ENCODE measurements at regions of chr6 and their contacts with region 1.

Region 1: DNA sequence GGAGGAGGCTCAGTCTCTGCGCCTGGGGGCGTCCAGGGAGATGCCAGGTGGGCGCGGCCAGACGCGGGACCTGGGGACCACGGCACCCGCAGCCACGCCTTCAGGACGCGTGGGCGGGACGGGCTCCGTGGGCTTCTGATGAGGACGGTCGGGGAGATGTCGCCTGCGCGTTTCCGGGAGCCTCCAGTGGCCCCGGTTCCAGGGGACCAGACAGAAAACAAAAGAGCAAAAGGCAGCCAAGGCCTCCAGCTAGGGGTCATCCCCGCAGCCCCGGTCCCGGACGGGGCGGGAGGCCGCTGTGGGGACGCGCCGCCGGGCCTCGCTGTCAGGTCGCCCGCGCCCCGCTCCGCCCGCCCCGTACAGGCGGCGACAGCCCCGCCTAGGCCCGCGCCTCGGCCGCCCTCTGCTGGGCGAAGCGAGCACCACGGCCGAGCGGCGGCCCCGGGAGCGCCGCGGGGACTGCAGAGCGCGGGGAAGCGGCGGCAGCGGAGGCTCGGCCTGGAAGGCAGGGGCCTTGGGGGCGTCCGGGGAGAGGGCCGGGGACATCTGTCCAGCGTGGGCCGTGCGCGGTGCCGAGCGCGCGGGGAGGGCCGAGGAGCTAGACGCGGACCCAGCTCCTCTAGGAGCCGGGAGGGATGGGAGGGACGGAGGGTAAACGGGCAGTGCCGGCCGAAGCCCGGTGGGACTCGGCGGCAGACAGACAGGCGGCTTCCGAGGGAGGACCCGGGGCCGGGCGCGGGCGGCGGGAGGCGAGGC is 48.7 kb downstream of the TMEM242 start:
- DNase-seq: peak; percentile 72 to 94 (median 88)
- ATAC-seq: peak; percentile 95
- H3K4me3 ChIP-seq: peak overlapping the region; percentile 80
- H3K4me3 Mint-ChIP-seq: peak overlapping the region; percentile 83 to 96 (median 92)
- H3K27ac ChIP-seq: peak overlapping the region; percentile 93
- H3K27ac Mint-ChIP-seq: peak overlapping the region; percentile 89 to 98 (median 92)
- H3K4me1 ChIP-seq: peaks cover 6 to 7% of the 10 kb centered on the region in 2 donors
- H3K4me1 Mint-ChIP-seq: peaks cover 0 to 10% (median 8%) of the 10 kb centered on the region in 7 donors
- H3K27me3 ChIP-seq: no peaks in the 10 kb centered on the region
- H3K27me3 Mint-ChIP-seq: peaks cover 0 to 15% (median 0%) of the 10 kb centered on the region in 5 donors

Region 2: GRCh38 chr6:156378853-156379252 is 895.8 kb before region 1 on chr6:
- CTCF ChIA-PET with region 1: no interaction called
- POLR2A ChIA-PET with region 1: no interaction called
- intact Hi-C with region 1: loop called in 1 of 2 experiments (anchors 1 kb)
- DNase-seq: peak in 6 of 9 donors; percentile 19 to 48 (median 36)
- ATAC-seq: peak; percentile 74
- H3K4me3 ChIP-seq: no peak overlapping the region
- H3K4me3 Mint-ChIP-seq: no peak overlapping the region
- H3K27ac ChIP-seq: no peak overlapping the region
- H3K27ac Mint-ChIP-seq: peak overlapping the region in 6 of 9 donors; percentile 8 to 67 (median 36)
- H3K4me1 ChIP-seq: no peaks in the 10 kb centered on the region
- H3K4me1 Mint-ChIP-seq: peaks cover 0 to 21% (median 0%) of the 10 kb centered on the region in 7 donors
- H3K27me3 ChIP-seq: no peaks in the 10 kb centered on the region
- H3K27me3 Mint-ChIP-seq: peaks cover 0 to 4% (median 0%) of the 10 kb centered on the region in 5 donors

Region 3: GRCh38 chr6:156686995-156687788 is 587.5 kb before region 1 on chr6:
- CTCF ChIA-PET with region 1: no interaction called
- POLR2A ChIA-PET with region 1: no interaction called
- intact Hi-C with region 1: loop called (anchors 1 kb)
- DNase-seq: peak in 8 of 9 donors; percentile 77 to 91 (median 87)
- ATAC-seq: peak; percentile 93
- H3K4me3 ChIP-seq: peak overlapping the region; percentile 89
- H3K4me3 Mint-ChIP-seq: peak overlapping the region; percentile 81 to 96 (median 90)
- H3K27ac ChIP-seq: peak overlapping the region; percentile 100
- H3K27ac Mint-ChIP-seq: peak overlapping the region; percentile 87 to 99 (median 95)
- H3K4me1 ChIP-seq: peaks cover 4 to 17% of the 10 kb centered on the region in 2 donors
- H3K4me1 Mint-ChIP-seq: peaks cover 10 to 28% (median 20%) of the 10 kb centered on the region in 7 donors
- H3K27me3 ChIP-seq: no peaks in the 10 kb centered on the region
- H3K27me3 Mint-ChIP-seq: peaks cover 0 to 27% (median 0%) of the 10 kb centered on the region in 5 donors

Region 4: DNA sequence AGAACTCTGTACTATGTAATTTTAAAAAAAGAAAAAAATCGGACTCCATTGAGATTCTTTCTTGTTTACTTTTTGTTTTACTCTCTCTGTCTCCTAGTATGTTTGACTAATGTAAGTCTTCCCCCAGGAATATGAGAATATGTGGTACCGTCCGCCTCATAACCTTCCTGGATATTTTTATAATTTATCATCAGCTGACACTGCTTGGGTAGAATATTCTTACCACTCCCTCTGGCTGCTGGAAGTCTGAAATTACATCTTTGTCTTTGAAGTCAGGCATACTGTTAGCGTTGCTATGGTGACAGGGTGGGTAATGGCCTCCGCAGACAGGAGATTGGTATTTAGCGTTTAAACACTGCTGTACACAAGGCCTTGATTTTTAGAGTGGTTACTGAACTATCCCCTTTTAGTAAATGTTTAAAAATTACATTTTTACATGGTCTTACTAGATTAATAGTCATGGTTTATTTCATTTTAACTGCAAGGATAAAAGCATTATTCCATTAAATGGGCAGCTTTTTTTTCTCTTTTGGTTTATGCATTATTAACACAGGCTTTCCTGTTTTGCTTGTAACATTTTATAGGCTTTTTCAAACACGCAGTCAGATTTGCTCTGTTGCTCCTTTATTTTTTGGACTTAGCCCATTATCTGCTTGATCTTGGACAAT is 321.0 kb before region 1 on chr6:
- CTCF ChIA-PET with region 1: no interaction called
- POLR2A ChIA-PET with region 1: no interaction called
- intact Hi-C with region 1: no loop called
- DNase-seq: peak in 7 of 9 donors; percentile 67 to 85 (median 82)
- ATAC-seq: peak; percentile 95
- H3K4me3 ChIP-seq: no peak overlapping the region
- H3K4me3 Mint-ChIP-seq: peak overlapping the region in 5 of 10 donors; percentile 10 to 51 (median 37)
- H3K27ac ChIP-seq: no peak overlapping the region
- H3K27ac Mint-ChIP-seq: peak overlapping the region in 8 of 9 donors; percentile 27 to 83 (median 51)
- H3K4me1 ChIP-seq: peaks cover 15 to 20% of the 10 kb centered on the region in 2 donors
- H3K4me1 Mint-ChIP-seq: peaks cover 41 to 84% (median 77%) of the 10 kb centered on the region in 7 donors
- H3K27me3 ChIP-seq: no peaks in the 10 kb centered on the region
- H3K27me3 Mint-ChIP-seq: no peaks in the 10 kb centered on the region

Region 5: DNA sequence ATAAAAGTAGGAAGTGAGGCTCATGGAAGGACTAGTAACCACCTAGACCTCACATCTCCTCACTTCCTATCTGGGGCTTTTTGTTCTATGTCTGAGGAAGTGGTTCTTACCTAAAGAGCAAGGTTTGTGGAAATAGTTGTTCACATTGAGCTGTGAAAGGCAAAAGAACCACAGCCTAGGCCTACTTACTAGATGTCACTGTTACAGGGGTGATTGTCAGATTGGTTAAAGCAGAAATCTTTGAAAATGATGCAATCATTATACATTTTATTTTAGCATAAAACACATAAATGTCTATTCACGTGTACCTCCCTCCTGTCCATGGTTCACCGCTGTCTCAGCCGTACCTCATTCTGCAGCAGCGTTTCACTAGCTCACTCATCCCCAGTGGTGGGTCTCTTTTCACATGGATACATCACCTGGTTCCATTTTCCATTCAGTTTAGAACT is 220.1 kb before region 1 on chr6:
- CTCF ChIA-PET with region 1: no interaction called
- POLR2A ChIA-PET with region 1: no interaction called
- intact Hi-C with region 1: loop called in 1 of 2 experiments (anchors 1 kb)
- DNase-seq: peak in 7 of 9 donors; percentile 60 to 83 (median 78)
- ATAC-seq: peak; percentile 97
- H3K4me3 ChIP-seq: peak overlapping the region; percentile 19
- H3K4me3 Mint-ChIP-seq: peak overlapping the region; percentile 37 to 73 (median 58)
- H3K27ac ChIP-seq: peak overlapping the region; percentile 60
- H3K27ac Mint-ChIP-seq: peak overlapping the region; percentile 81 to 94 (median 88)
- H3K4me1 ChIP-seq: peaks cover 27 to 31% of the 10 kb centered on the region in 2 donors
- H3K4me1 Mint-ChIP-seq: peaks cover 34 to 73% (median 57%) of the 10 kb centered on the region in 7 donors
- H3K27me3 ChIP-seq: no peaks in the 10 kb centered on the region
- H3K27me3 Mint-ChIP-seq: no peaks in the 10 kb centered on the region

Region 6: DNA sequence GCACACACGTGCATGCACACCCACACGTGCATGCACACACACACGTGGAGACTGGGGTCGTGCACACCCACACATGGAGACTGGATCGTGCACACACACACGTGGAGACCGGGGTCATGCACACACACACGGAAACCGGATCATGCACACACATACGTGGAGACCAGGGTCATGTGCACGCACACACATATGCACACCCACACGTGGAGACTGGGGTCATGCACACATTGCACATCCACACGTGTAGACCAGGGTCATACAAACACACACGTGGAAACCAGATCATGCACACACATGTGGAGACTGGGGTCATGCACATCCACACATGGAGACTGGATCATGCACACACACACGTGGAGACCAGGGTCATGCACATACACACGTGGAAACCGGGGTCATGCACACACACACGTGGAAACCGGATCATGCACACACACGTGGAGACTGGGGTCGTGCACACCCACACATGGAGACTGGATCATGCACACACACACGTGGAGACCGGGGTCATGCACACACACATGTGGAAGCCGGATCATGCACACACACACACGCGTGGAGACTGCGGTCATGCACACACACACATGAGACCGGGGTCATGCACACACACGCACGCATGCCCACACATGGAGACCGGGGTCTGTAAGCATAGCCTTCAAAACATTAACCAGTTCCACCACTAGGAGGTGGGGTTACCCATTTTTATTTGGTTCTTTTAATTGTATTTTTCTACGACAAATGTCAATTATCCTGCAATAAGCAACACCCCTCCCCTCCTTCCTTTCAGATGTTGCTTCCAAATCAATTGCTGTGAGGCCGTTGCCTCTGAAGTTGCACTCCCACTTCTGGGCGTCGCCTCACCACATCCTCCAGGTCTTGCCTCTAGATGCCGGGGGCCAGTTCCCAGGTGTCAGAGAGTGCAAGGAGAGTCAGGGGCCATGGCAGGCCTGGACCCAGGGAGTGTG is 47.2 kb before region 1 on chr6:
- CTCF ChIA-PET with region 1: interaction called, 7 read pairs
- POLR2A ChIA-PET with region 1: interaction called, 18 read pairs
- intact Hi-C with region 1: loop called in 1 of 2 experiments (anchors 1 kb)
- DNase-seq: peak in 7 of 9 donors; percentile 39 to 65 (median 57)
- ATAC-seq: peak; percentile 41
- H3K4me3 ChIP-seq: no peak overlapping the region
- H3K4me3 Mint-ChIP-seq: peak overlapping the region in 9 of 10 donors; percentile 56 to 81 (median 62)
- H3K27ac ChIP-seq: no peak overlapping the region
- H3K27ac Mint-ChIP-seq: peak overlapping the region; percentile 38 to 88 (median 62)
- H3K4me1 ChIP-seq: peaks cover 15 to 40% of the 10 kb centered on the region in 2 donors
- H3K4me1 Mint-ChIP-seq: peaks cover 33 to 64% (median 51%) of the 10 kb centered on the region in 7 donors
- H3K27me3 ChIP-seq: no peaks in the 10 kb centered on the region
- H3K27me3 Mint-ChIP-seq: peaks cover 0 to 9% (median 5%) of the 10 kb centered on the region in 5 donors

Region 7: DNA sequence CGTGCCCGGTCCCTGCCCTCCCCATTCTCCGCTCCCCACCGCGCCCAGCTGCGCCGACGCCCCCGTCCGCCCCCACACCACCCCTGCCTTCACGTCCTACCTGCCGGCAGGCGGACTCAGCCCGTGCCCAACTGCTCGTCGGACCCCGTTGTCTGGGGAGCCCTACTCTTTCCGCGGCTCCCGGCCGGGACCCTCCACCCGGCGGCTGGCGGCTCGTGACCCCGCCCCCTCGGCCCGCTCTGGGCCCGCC is 893.3 kb after region 1 on chr6 and contains the start of gene SERAC1:
- CTCF ChIA-PET with region 1: no interaction called
- POLR2A ChIA-PET with region 1: no interaction called
- intact Hi-C with region 1: loop called in 1 of 2 experiments (anchors 1 kb)
- DNase-seq: no peak
- ATAC-seq: peak; percentile 59
- H3K4me3 ChIP-seq: peak within 1 kb of the TSS; percentile 88
- H3K4me3 Mint-ChIP-seq: peak within 1 kb of the TSS; percentile 81 to 96 (median 96)
- H3K27ac ChIP-seq: peak within 1 kb of the TSS; percentile 96
- H3K27ac Mint-ChIP-seq: peak within 1 kb of the TSS; percentile 90 to 99 (median 98)
- H3K4me1 ChIP-seq: peaks cover 0 to 5% of the 10 kb centered on the region in 2 donors
- H3K4me1 Mint-ChIP-seq: peaks cover 14 to 46% (median 27%) of the 10 kb centered on the region in 7 donors
- H3K27me3 ChIP-seq: no peaks in the 10 kb centered on the region
- H3K27me3 Mint-ChIP-seq: no peaks in the 10 kb centered on the region
- total RNA-seq, gene SERAC1: 2.4 to 5.4 (median 4.6) TPM

Measured in naive thymus-derived CD4-positive, alpha-beta T cell (primary cell).